ENCODE measurements at regions of chr7 and their contacts with region 1.

Region 1: GRCh38 chr7:21412410-21412851 is 15.5 kb upstream of the SP4 start:
- DNase-seq: no peak

Region 2: GRCh38 chr7:21427182-21427870 is 14.9 kb after region 1 on chr7:
- CTCF ChIA-PET with region 1: no interaction called
- POLR2A ChIA-PET with region 1: interaction called, 12 read pairs
- DNase-seq: peak; percentile 92

Measured in HEK293T (cell line).